ENCODE measurements at regions of chr16 and their contacts with region 1.

Region 1: GRCh38 chr16:3717235-3718018 is at the start of gene TRAP1:
- DNase-seq: peak; percentile 87
- H3K4me3 Mint-ChIP-seq: peak within 1 kb of the TSS; percentile 91
- H3K27ac Mint-ChIP-seq: peak within 1 kb of the TSS; percentile 90
- H3K4me1 Mint-ChIP-seq: peaks cover 33% of the 10 kb centered on the region
- H3K27me3 Mint-ChIP-seq: peaks cover 2% of the 10 kb centered on the region
- total RNA-seq, gene TRAP1: 351 and 353 TPM in 2 replicates

Region 2: DNA sequence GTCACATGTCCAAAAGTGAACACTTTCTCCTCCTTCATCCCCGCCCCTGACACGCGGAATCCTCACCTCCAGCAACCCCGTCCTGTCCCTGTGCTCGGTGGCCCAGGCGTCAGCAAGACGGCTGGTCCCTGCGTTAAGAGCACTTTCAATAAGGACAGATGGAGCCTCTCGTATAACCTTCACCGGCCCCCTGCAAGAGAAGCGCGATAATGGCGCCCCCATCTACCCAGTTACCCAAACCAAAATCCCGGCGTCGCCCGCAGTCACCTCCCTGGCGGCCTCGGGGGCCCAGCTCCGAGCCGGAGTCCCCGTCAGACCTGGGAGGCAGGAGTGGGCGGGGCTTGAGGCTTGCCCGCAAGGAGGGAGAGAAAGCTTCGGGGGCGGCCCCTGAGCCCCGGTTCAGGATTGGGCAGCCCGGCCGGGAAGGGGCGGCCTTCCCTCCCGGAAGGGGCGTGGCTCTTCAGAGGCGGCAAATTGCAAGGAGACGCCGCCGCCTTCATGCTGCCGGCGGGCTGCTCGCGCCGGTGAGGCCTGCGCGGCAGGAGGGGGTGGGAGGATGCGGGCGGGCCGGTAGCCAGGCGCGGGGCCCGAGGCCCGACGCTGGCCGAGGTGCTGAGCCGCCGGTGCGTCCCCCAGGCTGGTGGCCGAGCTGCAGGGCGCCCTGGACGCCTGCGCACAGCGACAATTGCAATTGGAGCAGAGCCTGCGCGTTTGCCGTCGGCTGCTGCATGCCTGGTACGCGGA is 1257.6 kb before region 1 on chr16 and contains the start of gene TEDC2:
- intact Hi-C with region 1: no loop called
- DNase-seq: peak; percentile 96
- H3K4me3 Mint-ChIP-seq: peak within 1 kb of the TSS; percentile 86
- H3K27ac Mint-ChIP-seq: peak within 1 kb of the TSS; percentile 80
- H3K4me1 Mint-ChIP-seq: peaks cover 7% of the 10 kb centered on the region
- H3K27me3 Mint-ChIP-seq: no peaks in the 10 kb centered on the region
- total RNA-seq, gene TEDC2: 41.0 and 43.9 TPM in 2 replicates

Region 3: GRCh38 chr16:3690470-3690928 is 26.9 kb before region 1 on chr16:
- intact Hi-C with region 1: loop called (anchors 2 kb)
- DNase-seq: peak; percentile 72
- H3K4me3 Mint-ChIP-seq: peak overlapping the region; percentile 28
- H3K27ac Mint-ChIP-seq: no peak overlapping the region
- H3K4me1 Mint-ChIP-seq: peaks cover 9% of the 10 kb centered on the region
- H3K27me3 Mint-ChIP-seq: no peaks in the 10 kb centered on the region

Region 4: DNA sequence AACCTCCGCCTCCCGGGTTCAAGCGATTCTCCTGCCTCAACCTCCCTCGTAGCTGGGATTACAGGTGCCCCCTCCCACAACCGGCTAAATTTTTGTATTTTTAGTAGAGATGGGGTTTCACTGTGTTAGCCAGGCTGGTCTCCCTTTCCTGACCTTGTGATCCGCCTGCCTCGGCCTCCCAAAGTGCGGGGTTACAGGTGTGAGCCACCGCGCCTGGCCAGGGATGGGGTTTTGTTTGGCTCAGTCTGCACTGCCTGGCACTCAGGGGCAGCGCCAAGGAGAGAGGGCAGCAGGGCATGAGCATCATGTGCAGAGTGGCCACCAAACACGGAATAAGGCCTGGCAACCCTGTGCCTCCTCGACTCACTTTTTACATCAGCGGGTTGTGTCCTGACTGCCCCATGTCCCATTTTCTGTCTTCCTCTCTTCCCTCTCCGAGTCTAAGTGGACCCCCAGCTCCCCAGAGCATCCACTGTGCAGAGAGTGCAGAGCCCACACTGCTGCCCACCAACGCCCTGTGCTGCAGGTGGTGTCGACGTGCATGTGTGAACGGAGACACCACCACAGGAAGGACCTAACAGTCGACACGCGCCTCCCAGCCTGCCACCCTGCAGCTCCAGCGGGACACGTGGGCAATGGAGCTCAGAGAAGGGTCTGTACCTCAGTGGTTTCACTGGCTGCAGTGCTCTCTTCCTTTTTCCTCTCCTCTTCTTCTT is 18.1 kb after region 1 on chr16:
- intact Hi-C with region 1: no loop called
- DNase-seq: no peak
- H3K4me3 Mint-ChIP-seq: no peak overlapping the region
- H3K27ac Mint-ChIP-seq: no peak overlapping the region
- H3K4me1 Mint-ChIP-seq: no peaks in the 10 kb centered on the region
- H3K27me3 Mint-ChIP-seq: no peaks in the 10 kb centered on the region

Measured in activated T-helper 1 cell treated with anti-CD3 and anti-CD28 coated beads, Interleukin-12 subunit alpha, Interleukin-12 subunit beta, Interleukin-2, Interleukin-4 antibody, amounts not matched to agents 30 ng/mL and 10 ng/mL and 1 ng/mL, durations not matched to agents 14 hours and 24 hours and 36 hours (primary cell).